Astrocyte of the cerebellum (primary cell): ENCODE measurements at regions of chr2 and their contacts with region 1.

Region 1: GRCh38 chr2:74059137-74059775 is 74.5 kb downstream of the TET3 start:
- DNase-seq: no peak
- H3K4me3 ChIP-seq: no peak overlapping the region
- CTCF ChIP-seq: no peak

Region 2: GRCh38 chr2:74111380-74111779 is 52.1 kb after region 1 on chr2:
- in situ Hi-C with region 1: loop called (anchors 5 kb)
- DNase-seq: no peak
- H3K4me3 ChIP-seq: no peak overlapping the region
- CTCF ChIP-seq: no peak